Heart right ventricle (tissue), 16 donors: ENCODE measurements at regions of chr17 and their contacts with region 1.

Region 1: GRCh38 chr17:68759343-68760132 is 158.4 kb upstream of the FAM20A start:
- DNase-seq: peak; percentile 81 to 88
- ATAC-seq: peak; percentile 96 to 99 (median 98)
- H3K4me3 ChIP-seq: peak overlapping the region in 7 of 10 donors; percentile 14 to 49 (median 40)
- H3K27ac ChIP-seq: peak overlapping the region; percentile 42 to 90 (median 79)
- H3K4me1 ChIP-seq: peaks cover 0 to 14% (median 8%) of the 10 kb centered on the region in 9 donors
- H3K27me3 ChIP-seq: no peaks in the 10 kb centered on the region
- CTCF ChIP-seq: peak; percentile 69 to 95 (median 86)

Region 2: GRCh38 chr17:68172461-68172954 is 587.0 kb before region 1 on chr17:
- intact Hi-C with region 1: loop called in 3 of 10 experiments (anchors 5 to 10 kb)
- DNase-seq: peak; percentile 63 to 73
- ATAC-seq: peak; percentile 37 to 86 (median 74)
- H3K4me3 ChIP-seq: no peak overlapping the region
- H3K27ac ChIP-seq: no peak overlapping the region
- H3K4me1 ChIP-seq: peaks cover 0 to 4% (median 0%) of the 10 kb centered on the region in 9 donors
- H3K27me3 ChIP-seq: no peaks in the 10 kb centered on the region
- CTCF ChIP-seq: peak; percentile 93 to 99 (median 97)

Region 3: DNA sequence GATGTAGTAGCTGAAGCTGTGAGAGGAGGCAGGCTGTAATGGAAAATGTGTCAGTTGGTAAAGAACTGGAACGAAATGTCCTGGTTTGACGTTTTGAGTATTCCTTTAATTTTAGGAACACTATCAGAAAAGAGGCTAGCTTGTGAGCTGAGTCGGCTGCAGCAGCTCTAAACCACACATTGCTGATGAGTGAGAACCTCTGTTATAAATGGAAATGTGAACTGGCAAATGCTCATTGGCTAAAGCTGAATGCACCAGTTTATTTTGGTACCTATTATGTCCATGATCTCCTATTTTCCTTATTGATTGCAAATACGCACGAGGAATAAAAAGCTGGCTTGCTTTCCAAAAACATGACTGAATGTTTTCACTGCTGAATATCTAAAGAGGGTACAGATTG is 291.2 kb before region 1 on chr17:
- intact Hi-C with region 1: loop called in 5 of 10 experiments (anchors 5 to 10 kb)
- DNase-seq: peak in 1 of 2 donors; percentile 51
- ATAC-seq: peak; percentile 68 to 92 (median 86)
- H3K4me3 ChIP-seq: no peak overlapping the region
- H3K27ac ChIP-seq: peak overlapping the region; percentile 33 to 94 (median 84)
- H3K4me1 ChIP-seq: peaks cover 0 to 34% (median 8%) of the 10 kb centered on the region in 9 donors
- H3K27me3 ChIP-seq: no peaks in the 10 kb centered on the region
- CTCF ChIP-seq: no peak

Region 4: GRCh38 chr17:68539548-68540467 is 219.7 kb before region 1 on chr17:
- intact Hi-C with region 1: loop called in 8 of 10 experiments (anchors 5 to 10 kb)
- DNase-seq: no peak
- ATAC-seq: peak; percentile 7 to 38 (median 20)
- H3K4me3 ChIP-seq: no peak overlapping the region
- H3K27ac ChIP-seq: peak overlapping the region in 7 of 10 donors; percentile 1 to 67 (median 46)
- H3K4me1 ChIP-seq: peaks cover 0 to 59% (median 11%) of the 10 kb centered on the region in 9 donors
- H3K27me3 ChIP-seq: no peaks in the 10 kb centered on the region
- CTCF ChIP-seq: peak in 4 of 9 donors; percentile 29 to 43 (median 38)

Region 5: GRCh38 chr17:68600067-68600930 is 159.2 kb before region 1 on chr17:
- intact Hi-C with region 1: loop called in 1 of 10 experiments (anchors 10 kb)
- DNase-seq: peak; percentile 24 to 55
- ATAC-seq: peak; percentile 35 to 85 (median 53)
- H3K4me3 ChIP-seq: peak overlapping the region; percentile 51 to 84 (median 70)
- H3K27ac ChIP-seq: peak overlapping the region; percentile 50 to 96 (median 75)
- H3K4me1 ChIP-seq: peaks cover 0 to 70% (median 18%) of the 10 kb centered on the region in 9 donors
- H3K27me3 ChIP-seq: peaks cover 0 to 41% (median 0%) of the 10 kb centered on the region in 7 donors
- CTCF ChIP-seq: peak in 7 of 9 donors; percentile 11 to 61 (median 35)

Region 6: GRCh38 chr17:68627956-68628575 is 131.5 kb before region 1 on chr17:
- intact Hi-C with region 1: loop called in 1 of 10 experiments (anchors 10 kb)
- DNase-seq: no peak
- ATAC-seq: peak in 6 of 8 donors; percentile 19 to 38 (median 22)
- H3K4me3 ChIP-seq: no peak overlapping the region
- H3K27ac ChIP-seq: no peak overlapping the region
- H3K4me1 ChIP-seq: peaks cover 0 to 7% (median 0%) of the 10 kb centered on the region in 9 donors
- H3K27me3 ChIP-seq: no peaks in the 10 kb centered on the region
- CTCF ChIP-seq: no peak

Region 7: DNA sequence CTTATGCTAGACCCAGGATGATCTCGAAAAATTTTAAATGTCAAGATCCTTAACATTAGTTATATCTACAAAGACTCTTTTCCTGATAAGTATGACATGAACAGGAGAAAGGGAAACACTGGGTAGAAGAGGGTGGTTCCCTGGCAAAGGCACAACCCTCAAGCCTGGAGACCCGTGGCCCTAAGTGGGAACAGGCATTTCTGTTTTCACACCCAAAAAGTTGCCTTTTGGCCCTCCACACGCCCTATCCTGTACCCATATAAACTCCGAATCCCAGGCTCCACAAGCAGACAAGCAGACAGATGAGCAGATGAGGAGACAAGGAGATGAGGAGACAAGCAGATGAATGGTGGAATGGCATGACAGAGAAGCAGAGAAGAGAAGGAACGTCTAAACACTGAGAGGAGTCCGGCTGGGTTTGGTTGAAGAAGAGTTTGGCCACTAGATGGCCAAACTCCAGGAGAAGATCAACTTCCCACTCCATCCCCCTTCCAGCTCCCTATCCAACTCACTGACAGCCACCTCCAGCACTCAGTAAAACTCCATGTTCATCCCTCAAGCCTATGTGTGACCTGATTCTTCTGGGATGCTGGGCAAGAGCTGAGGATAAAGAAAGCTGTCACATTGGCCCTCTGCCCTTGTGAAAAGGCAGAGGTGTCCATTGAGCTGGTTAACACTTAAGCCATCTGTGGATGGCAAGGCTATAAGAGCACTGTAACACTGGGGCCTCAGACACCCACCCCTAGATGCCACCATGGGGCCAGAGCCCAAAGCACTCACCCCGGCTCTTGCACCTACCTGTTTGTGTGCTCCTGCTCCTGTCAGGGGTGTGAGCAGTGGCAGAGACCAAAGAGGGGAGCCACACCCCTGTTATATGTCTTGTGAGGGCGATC is 18.7 kb before region 1 on chr17:
- intact Hi-C with region 1: no loop called
- DNase-seq: no peak
- ATAC-seq: no peak
- H3K4me3 ChIP-seq: no peak overlapping the region
- H3K27ac ChIP-seq: no peak overlapping the region
- H3K4me1 ChIP-seq: peaks cover 0 to 15% (median 10%) of the 10 kb centered on the region in 9 donors
- H3K27me3 ChIP-seq: no peaks in the 10 kb centered on the region
- CTCF ChIP-seq: no peak

Region 8: DNA sequence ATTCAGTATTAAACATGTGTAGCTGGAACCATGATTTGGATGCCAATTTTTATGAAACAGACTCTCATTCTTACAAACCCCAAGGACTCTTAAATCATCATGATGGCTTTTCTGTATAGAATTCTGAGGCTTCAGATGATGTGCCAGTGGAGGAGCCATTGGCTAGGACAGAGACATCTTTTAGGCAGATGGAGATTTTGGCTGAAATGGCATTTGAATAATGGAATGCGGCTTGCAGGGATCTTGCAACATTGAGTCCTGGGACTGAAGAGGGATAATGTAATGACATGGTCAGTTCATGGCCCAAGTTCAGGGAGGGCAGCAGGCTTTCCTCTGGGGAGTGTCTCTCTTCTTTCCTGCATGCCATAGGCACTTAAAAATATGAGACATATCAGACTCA is 23.3 kb after region 1 on chr17:
- intact Hi-C with region 1: no loop called
- DNase-seq: no peak
- ATAC-seq: peak in 3 of 8 donors; percentile 27 to 85 (median 72)
- H3K4me3 ChIP-seq: no peak overlapping the region
- H3K27ac ChIP-seq: peak overlapping the region in 1 of 10 donors; percentile 41
- H3K4me1 ChIP-seq: peaks cover 0 to 25% (median 8%) of the 10 kb centered on the region in 9 donors
- H3K27me3 ChIP-seq: no peaks in the 10 kb centered on the region
- CTCF ChIP-seq: no peak